Cardiac septum (tissue), 1 donor: ENCODE measurements at regions of chrX and their contacts with region 1.

Region 1: GRCh38 chrX:53088136-53088974 is 5.6 kb upstream of the KANTR start:
- DNase-seq: peak; percentile 84

Region 2: DNA sequence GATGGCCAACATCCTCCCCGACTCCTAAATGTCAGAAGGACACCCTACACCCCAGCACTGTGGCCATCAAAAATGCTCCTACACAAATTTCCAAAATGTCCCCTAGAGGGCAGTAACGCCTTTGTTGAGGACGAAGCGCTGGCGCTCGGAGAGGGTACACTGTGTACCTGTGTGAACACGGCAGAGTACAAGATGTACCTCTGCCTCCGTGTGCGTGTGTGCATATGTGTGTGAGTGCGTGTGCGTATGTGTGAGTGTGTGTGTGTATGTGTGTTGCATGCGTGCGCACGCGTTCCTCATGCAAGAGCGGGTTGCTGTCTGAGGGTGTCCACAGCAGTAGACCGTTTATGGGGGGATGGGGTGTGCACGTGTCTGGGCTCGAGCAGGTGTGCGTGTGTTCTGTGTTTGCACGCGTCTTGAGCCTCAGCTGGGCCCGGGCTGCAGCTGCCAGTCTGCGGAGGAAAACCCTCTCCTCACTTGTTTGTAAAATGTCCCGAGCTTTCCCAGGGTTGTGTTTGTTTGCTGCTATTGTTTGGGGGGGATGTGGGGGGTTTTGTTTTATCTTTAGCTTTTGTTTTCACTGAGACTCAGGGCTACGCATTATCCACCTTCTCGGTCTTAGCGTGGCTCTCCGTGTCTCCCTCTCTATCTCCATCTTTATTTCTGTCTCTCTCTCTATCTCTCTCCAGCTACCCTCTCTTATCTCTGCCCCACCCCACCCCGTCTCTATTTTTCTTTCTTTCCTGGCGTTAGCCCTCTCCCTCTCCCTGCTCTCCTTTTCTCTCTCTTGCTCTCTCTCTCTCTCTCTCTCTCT is 16.5 kb before region 1 on chrX:
- intact Hi-C with region 1: loop called (anchors 2 kb)
- DNase-seq: no peak

Region 3: GRCh38 chrX:53395601-53396298 is 307.4 kb after region 1 on chrX:
- intact Hi-C with region 1: no loop called
- DNase-seq: no peak